ENCODE measurements at regions of chr18 and their contacts with region 1.

Region 1: DNA sequence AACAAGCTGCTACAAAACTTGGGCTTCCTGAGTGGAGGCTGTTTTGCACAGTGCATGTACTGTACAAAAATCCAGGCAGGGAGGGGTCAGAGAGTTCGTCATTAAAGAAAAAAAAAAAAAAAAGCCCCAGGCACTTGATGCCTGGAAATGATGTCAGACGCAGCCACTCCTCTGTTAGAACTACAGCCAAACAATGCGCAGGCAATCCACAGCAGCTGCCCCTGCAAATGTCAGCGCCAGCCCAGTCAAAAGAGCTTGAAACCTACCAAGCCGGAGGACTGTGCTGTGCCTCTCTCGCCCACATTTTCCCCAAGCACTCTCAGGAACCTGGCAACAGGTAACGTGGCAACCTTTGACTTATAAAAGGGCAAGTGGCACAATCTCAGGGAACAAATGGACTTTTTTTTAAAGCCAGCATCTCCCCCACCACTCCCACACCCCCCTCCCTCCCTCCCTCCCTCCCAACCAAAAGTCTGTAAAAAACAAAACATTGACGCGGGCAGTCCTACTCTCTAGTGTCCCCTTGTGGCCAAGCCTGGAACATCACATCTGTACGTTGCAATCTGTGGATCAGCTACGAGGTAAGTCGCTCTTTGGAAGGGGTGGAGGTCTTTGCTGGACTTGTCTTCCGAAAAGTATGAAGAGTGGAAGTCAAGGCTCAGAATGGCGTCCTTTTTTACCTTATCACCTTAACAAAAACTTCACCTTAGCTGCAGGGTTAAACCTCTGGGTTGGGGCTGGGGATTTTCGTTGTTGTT is 144.1 kb downstream of the TGIF1 start:
- DNase-seq: peak; percentile 90
- H3K4me3 ChIP-seq: peak overlapping the region; percentile 27 to 40
- H3K27ac ChIP-seq: peak overlapping the region; percentile 95 to 96
- H3K4me1 ChIP-seq: peaks cover 7% of the 10 kb centered on the region
- H3K27me3 ChIP-seq: no peaks in the 10 kb centered on the region
- CTCF ChIP-seq: peak; percentile 86 to 98 (median 95)
- POLR2A ChIP-seq: peak; percentile 24

Region 2: GRCh38 chr18:3151399-3152264 is 442.5 kb before region 1 on chr18:
- intact Hi-C with region 1: loop called (anchors 5 kb)
- DNase-seq: no peak
- H3K4me3 ChIP-seq: no peak overlapping the region
- H3K27ac ChIP-seq: no peak overlapping the region
- H3K4me1 ChIP-seq: no peaks in the 10 kb centered on the region
- H3K27me3 ChIP-seq: no peaks in the 10 kb centered on the region
- CTCF ChIP-seq: peak in 3 of 4 experiments; percentile 53 to 65 (median 63)
- POLR2A ChIP-seq: no peak

Region 3: GRCh38 chr18:3261371-3262246 is 332.5 kb before region 1 on chr18 and contains the start of gene MYL12B:
- intact Hi-C with region 1: loop called (anchors 5 kb)
- DNase-seq: peak; percentile 70
- H3K4me3 ChIP-seq: peak within 1 kb of the TSS; percentile 89 to 90
- H3K27ac ChIP-seq: peak within 1 kb of the TSS; percentile 95 to 98
- H3K4me1 ChIP-seq: peaks cover 7% of the 10 kb centered on the region
- H3K27me3 ChIP-seq: no peaks in the 10 kb centered on the region
- CTCF ChIP-seq: peak in 1 of 4 experiments; percentile 33
- POLR2A ChIP-seq: peak; percentile 56
- total RNA-seq, gene MYL12B: 254 to 310 TPM

Region 4: GRCh38 chr18:3541549-3542386 is 52.3 kb before region 1 on chr18:
- intact Hi-C with region 1: no loop called
- DNase-seq: no peak
- H3K4me3 ChIP-seq: no peak overlapping the region
- H3K27ac ChIP-seq: no peak overlapping the region
- H3K4me1 ChIP-seq: peaks cover 5% of the 10 kb centered on the region
- H3K27me3 ChIP-seq: no peaks in the 10 kb centered on the region
- CTCF ChIP-seq: no peak
- POLR2A ChIP-seq: no peak

Region 5: DNA sequence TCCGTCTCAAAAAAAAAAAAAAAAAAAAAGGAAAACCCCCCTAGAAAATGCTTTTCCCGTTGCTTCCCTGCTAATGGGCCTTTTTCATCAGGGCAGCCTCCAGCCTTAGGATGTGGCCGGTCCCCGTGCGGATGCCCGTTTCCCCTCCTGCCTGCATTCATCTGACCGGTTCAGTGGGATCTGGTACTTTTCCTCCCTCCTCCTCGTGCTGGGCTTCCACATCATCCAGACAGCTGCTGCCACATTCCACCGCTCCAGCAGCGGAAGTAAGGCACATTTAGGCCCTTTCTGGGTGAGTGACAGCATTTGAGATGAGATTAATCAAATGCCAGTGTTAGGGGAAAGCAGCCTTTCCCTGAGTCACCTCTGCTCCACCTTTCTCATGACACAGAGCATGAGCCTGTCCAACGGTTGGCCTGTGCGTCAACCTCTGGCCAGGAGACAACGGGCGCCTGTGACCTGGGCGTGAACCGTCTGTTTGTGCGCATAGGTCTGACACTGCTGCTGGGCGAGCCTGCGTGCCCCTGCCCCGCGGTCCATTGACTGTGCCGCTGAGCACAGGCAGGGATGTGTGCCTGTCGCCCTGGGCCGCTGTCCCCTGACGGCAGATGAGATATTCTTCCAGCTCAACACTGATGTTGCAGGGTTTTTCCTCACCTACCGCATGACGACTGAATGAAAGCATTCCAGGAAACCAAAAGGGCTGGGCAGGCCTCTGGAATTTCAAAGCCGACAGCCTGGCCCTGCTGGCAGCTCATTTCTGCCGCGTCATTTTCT is 29.9 kb after region 1 on chr18:
- intact Hi-C with region 1: loop called (anchors 2 kb)
- DNase-seq: peak; percentile 61
- H3K4me3 ChIP-seq: no peak overlapping the region
- H3K27ac ChIP-seq: peak overlapping the region; percentile 70 to 80
- H3K4me1 ChIP-seq: peaks cover 5% of the 10 kb centered on the region
- H3K27me3 ChIP-seq: no peaks in the 10 kb centered on the region
- CTCF ChIP-seq: peak in 1 of 4 experiments; percentile 6
- POLR2A ChIP-seq: peak; percentile 31

Region 6: DNA sequence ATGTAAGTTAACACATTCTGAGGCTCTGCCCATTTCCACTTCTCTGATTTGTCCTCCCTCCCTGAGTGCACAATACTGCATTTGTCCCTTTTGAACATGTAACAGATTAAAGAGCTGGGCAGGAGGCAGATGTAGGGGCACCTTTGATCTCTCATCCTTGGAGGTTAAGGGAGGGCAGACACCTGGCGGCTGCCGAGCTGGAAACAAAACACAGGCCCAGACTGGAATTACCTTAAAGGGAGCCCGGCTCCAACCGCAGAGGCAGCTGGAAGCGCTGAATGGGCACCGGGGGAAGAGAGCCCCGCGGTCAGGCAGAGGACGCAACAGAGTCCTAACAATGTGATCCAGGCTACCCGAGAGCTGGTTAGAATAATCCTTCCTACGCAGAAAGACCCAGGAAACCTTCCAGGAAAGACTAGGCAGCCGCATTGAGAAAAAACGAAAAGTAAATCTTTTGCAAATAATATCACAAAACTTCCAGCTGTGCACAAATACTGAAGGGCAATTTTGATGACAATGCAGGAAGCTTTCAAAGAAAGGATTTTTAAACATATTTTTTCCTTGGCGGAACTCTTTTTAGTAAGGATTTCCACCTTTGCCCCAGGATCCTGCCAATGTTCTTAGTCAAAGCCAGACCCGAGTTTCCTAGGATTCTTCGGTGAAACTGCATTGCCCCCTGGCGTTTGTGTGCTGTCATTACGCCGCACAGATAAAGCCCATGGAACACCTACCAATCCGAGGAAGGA is 71.9 kb after region 1 on chr18:
- intact Hi-C with region 1: loop called (anchors 5 kb)
- DNase-seq: peak; percentile 85
- H3K4me3 ChIP-seq: no peak overlapping the region
- H3K27ac ChIP-seq: peak overlapping the region; percentile 57 to 62
- H3K4me1 ChIP-seq: no peaks in the 10 kb centered on the region
- H3K27me3 ChIP-seq: no peaks in the 10 kb centered on the region
- CTCF ChIP-seq: peak; percentile 76 to 96 (median 95)
- POLR2A ChIP-seq: no peak